Heart left ventricle (tissue), 16 donors: ENCODE measurements at regions of chr19 and their contacts with region 1.

Region 1: GRCh38 chr19:7582446-7582845 is 13.2 kb upstream of the CAMSAP3 start:
- DNase-seq: no peak
- ATAC-seq: no peak
- H3K4me3 ChIP-seq: no peak overlapping the region
- H3K27ac ChIP-seq: no peak overlapping the region
- H3K4me1 ChIP-seq: no peaks in the 10 kb centered on the region
- H3K27me3 ChIP-seq: no peaks in the 10 kb centered on the region
- CTCF ChIP-seq: no peak
- POLR2A ChIP-seq: no peak

Region 2: DNA sequence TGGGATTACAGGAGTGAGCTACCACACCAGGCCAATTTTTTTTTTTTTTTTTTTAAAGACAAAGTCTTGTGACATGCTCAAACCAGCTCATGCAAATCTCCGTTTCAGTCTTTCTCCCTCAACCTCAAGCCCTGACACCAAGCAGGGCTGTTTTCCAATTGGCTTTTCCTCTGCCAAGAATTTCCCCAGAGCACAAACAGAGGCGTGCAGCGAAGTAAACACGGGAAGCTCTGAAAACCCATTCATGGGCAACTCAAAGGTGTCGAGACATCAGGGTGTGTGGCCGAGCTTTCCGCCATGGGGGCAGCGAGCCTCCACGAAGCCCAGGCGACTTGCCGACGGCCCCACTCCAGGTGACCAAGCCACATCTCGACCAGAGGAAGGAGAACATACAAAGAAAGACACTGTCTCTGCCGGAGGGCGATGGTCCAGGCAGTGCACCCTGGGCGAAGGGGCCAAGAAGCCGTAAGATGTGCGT is 358.2 kb before region 1 on chr19:
- intact Hi-C with region 1: no loop called
- DNase-seq: peak in 2 of 5 donors; percentile 20 to 53
- ATAC-seq: peak; percentile 41 to 68 (median 52)
- H3K4me3 ChIP-seq: peak overlapping the region in 2 of 12 donors; percentile 12 to 28
- H3K27ac ChIP-seq: peak overlapping the region in 8 of 12 donors; percentile 12 to 76 (median 51)
- H3K4me1 ChIP-seq: peaks cover 0 to 48% (median 33%) of the 10 kb centered on the region in 12 donors
- H3K27me3 ChIP-seq: no peaks in the 10 kb centered on the region
- CTCF ChIP-seq: no peak
- POLR2A ChIP-seq: no peak

Region 3: GRCh38 chr19:7762719-7763293 is 180.4 kb after region 1 on chr19 and contains the start of gene CLEC4M:
- intact Hi-C with region 1: no loop called
- DNase-seq: no peak
- ATAC-seq: no peak
- H3K4me3 ChIP-seq: no peak within 1 kb of the TSS
- H3K27ac ChIP-seq: no peak within 1 kb of the TSS
- H3K4me1 ChIP-seq: peaks cover 0 to 4% (median 0%) of the 10 kb centered on the region in 12 donors
- H3K27me3 ChIP-seq: peaks cover 0 to 18% (median 0%) of the 10 kb centered on the region in 9 donors
- CTCF ChIP-seq: no peak
- POLR2A ChIP-seq: no peak
- total RNA-seq, gene CLEC4M: not detected

Region 4: DNA sequence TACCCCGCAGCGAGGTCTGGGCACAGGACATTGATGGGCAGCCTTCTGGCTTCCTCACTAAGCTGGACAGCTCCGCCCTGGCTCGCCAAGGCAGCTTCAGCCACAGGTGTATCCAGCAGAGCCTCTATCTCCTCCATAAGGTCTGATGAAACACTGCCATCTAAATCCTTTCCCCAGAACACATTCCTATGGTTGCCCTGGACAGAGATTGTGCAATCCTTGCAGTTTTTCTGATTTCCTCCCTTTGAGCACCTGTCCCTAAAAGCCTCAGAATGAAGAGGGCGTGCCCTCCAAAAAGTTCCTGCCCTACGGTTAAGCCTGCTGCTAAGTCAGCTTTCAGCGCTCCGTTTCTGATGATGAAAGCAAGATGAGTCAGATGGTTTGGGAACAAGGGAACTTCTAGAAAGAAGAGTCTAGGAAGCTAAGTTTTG is 201.6 kb after region 1 on chr19:
- intact Hi-C with region 1: loop called in 1 of 10 experiments (anchors 10 kb)
- DNase-seq: peak in 1 of 5 donors; percentile 47
- ATAC-seq: peak in 3 of 4 donors; percentile 31 to 61 (median 49)
- H3K4me3 ChIP-seq: no peak overlapping the region
- H3K27ac ChIP-seq: no peak overlapping the region
- H3K4me1 ChIP-seq: peaks cover 0 to 6% (median 0%) of the 10 kb centered on the region in 12 donors
- H3K27me3 ChIP-seq: peaks cover 8 to 82% (median 30%) of the 10 kb centered on the region in 9 donors
- CTCF ChIP-seq: no peak
- POLR2A ChIP-seq: no peak